GM23248 (cell line): ENCODE measurements at regions of chr19 and their contacts with region 1.

Region 1: GRCh38 chr19:10388957-10389356 is 8.6 kb upstream of the TYK2 start:
- DNase-seq: peak; percentile 73
- H3K4me3 ChIP-seq: no peak overlapping the region
- H3K27ac ChIP-seq: no peak overlapping the region
- H3K4me1 ChIP-seq: no peaks in the 10 kb centered on the region
- H3K27me3 ChIP-seq: no peaks in the 10 kb centered on the region

Region 2: GRCh38 chr19:10269333-10270179 is 119.4 kb before region 1 on chr19:
- in situ Hi-C with region 1: loop called (anchors 5 kb)
- DNase-seq: peak; percentile 87
- H3K4me3 ChIP-seq: peak overlapping the region; percentile 58
- H3K27ac ChIP-seq: no peak overlapping the region
- H3K4me1 ChIP-seq: no peaks in the 10 kb centered on the region
- H3K27me3 ChIP-seq: no peaks in the 10 kb centered on the region